ENCODE measurements at regions of chr6 and their contacts with region 1.

Region 1: DNA sequence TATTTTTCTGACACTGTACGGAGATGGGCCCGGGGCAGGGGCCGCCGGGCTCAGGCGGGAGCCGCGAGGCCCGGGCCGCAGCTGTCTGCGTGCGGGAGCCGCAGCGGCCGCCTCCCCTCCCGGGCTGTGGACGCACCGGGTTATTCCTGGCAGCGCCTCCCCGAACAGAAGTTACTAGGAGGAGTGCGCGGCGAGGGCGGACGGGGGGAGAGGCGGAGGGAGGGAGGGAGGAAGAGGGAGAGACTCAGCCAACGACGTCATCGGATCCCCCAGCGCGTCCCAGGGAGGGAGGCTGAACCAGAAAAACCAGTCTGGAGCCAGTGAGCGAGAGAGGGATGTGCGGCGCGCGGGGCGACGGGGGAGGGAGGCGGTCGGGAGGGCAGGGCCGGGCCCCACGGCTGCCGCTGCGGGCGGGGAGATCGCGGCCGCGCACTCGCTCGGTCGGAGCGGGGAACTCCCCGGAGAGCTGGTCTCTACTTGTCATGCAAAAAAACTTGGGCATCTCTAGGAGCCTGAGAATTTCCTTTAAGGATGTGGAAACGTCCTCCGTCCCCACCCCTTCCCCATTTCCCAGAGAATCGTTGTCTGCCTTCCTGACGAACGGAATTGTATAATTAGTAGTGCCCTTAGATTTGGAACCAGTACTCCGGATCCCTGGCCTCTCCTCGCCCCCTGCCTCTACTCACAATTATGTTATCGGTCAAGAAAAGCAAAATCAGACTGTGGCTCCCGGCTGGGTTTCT is 1.4 kb upstream of the HIVEP2 start:
- DNase-seq: peak; percentile 99
- H3K4me3 Mint-ChIP-seq: peak overlapping the region; percentile 92
- H3K27ac Mint-ChIP-seq: peak overlapping the region; percentile 63
- H3K4me1 Mint-ChIP-seq: peaks cover 21% of the 10 kb centered on the region
- H3K27me3 Mint-ChIP-seq: no peaks in the 10 kb centered on the region
- CTCF ChIP-seq: no peak

Region 2: DNA sequence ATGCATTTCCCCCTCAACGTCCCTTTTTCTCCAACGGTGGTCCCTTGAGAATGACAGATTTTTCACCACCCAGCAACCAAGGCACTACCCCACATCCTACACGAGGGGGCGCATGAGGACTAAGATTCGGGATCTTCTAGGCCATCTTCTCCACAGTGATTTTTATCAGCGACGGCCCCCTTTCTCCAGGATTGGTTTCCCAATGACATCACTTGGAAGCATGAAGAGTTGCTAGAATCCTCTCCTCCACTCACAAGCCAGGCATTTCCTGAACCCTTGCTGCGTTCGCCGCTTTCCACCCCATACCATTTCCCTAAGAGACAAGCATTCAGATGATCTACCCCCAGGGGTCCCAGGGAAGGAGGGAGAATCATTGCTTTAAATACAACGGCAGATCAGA is 253.4 kb before region 1 on chr6:
- CTCF ChIA-PET with region 1: interaction called, 4 read pairs
- POLR2A ChIA-PET with region 1: interaction called, 3 read pairs
- intact Hi-C with region 1: loop called (anchors 1 kb)
- DNase-seq: peak; percentile 82
- H3K4me3 Mint-ChIP-seq: no peak overlapping the region
- H3K27ac Mint-ChIP-seq: no peak overlapping the region
- H3K4me1 Mint-ChIP-seq: peaks cover 43% of the 10 kb centered on the region
- H3K27me3 Mint-ChIP-seq: no peaks in the 10 kb centered on the region
- CTCF ChIP-seq: peak; percentile 85

Region 3: GRCh38 chr6:142845624-142846458 is 100.5 kb before region 1 on chr6:
- CTCF ChIA-PET with region 1: no interaction called
- POLR2A ChIA-PET with region 1: interaction called, 12 read pairs
- intact Hi-C with region 1: loop called (anchors 2 kb)
- DNase-seq: peak; percentile 92
- H3K4me3 Mint-ChIP-seq: peak overlapping the region; percentile 69
- H3K27ac Mint-ChIP-seq: peak overlapping the region; percentile 95
- H3K4me1 Mint-ChIP-seq: peaks cover 70% of the 10 kb centered on the region
- H3K27me3 Mint-ChIP-seq: no peaks in the 10 kb centered on the region
- CTCF ChIP-seq: no peak

Region 4: GRCh38 chr6:142926494-142927270 is 19.7 kb before region 1 on chr6:
- CTCF ChIA-PET with region 1: no interaction called
- POLR2A ChIA-PET with region 1: interaction called, 71 read pairs
- intact Hi-C with region 1: no loop called
- DNase-seq: peak; percentile 61
- H3K4me3 Mint-ChIP-seq: peak overlapping the region; percentile 84
- H3K27ac Mint-ChIP-seq: peak overlapping the region; percentile 92
- H3K4me1 Mint-ChIP-seq: peaks cover 44% of the 10 kb centered on the region
- H3K27me3 Mint-ChIP-seq: no peaks in the 10 kb centered on the region
- CTCF ChIP-seq: no peak

Region 5: DNA sequence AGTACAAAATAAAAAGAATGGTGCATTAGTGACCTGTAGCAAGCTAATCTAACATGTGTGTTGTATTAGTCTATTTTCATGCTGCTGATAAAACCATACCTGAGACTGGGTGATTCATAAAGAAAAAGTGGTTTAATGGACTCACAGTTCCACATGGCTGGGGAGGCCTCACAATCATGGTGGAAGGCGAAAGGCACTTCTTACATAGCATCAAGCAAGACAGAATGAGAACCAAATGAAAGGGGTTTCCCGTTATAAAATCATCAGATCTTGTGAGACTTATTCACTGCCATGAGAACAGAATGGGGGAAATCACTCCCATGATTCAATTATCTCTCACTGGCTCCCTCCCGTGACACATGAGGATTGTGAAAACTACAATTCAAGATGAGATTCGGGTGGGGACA is 69.0 kb after region 1 on chr6:
- CTCF ChIA-PET with region 1: no interaction called
- POLR2A ChIA-PET with region 1: no interaction called
- intact Hi-C with region 1: no loop called
- DNase-seq: no peak
- H3K4me3 Mint-ChIP-seq: no peak overlapping the region
- H3K27ac Mint-ChIP-seq: no peak overlapping the region
- H3K4me1 Mint-ChIP-seq: no peaks in the 10 kb centered on the region
- H3K27me3 Mint-ChIP-seq: no peaks in the 10 kb centered on the region
- CTCF ChIP-seq: no peak

Region 6: GRCh38 chr6:143325379-143326140 is 379.2 kb after region 1 on chr6:
- CTCF ChIA-PET with region 1: no interaction called
- POLR2A ChIA-PET with region 1: interaction called, 20 read pairs
- intact Hi-C with region 1: no loop called
- DNase-seq: peak; percentile 77
- H3K4me3 Mint-ChIP-seq: no peak overlapping the region
- H3K27ac Mint-ChIP-seq: no peak overlapping the region
- H3K4me1 Mint-ChIP-seq: peaks cover 13% of the 10 kb centered on the region
- H3K27me3 Mint-ChIP-seq: no peaks in the 10 kb centered on the region
- CTCF ChIP-seq: no peak

Region 7: GRCh38 chr6:143450453-143451371 is 504.4 kb after region 1 on chr6 and contains the starts of genes ADAT2 and PEX3:
- CTCF ChIA-PET with region 1: no interaction called
- POLR2A ChIA-PET with region 1: interaction called, 44 read pairs
- intact Hi-C with region 1: no loop called
- DNase-seq: peak; percentile 95
- H3K4me3 Mint-ChIP-seq: peak within 1 kb of the TSS; percentile 97
- H3K27ac Mint-ChIP-seq: peak within 1 kb of the TSS; percentile 97
- H3K4me1 Mint-ChIP-seq: peaks cover 24% of the 10 kb centered on the region
- H3K27me3 Mint-ChIP-seq: no peaks in the 10 kb centered on the region
- CTCF ChIP-seq: no peak
- total RNA-seq, gene ADAT2: 23.2 and 27.7 TPM in 2 replicates
- total RNA-seq, gene PEX3: 19.8 and 24.3 TPM in 2 replicates

Region 8: DNA sequence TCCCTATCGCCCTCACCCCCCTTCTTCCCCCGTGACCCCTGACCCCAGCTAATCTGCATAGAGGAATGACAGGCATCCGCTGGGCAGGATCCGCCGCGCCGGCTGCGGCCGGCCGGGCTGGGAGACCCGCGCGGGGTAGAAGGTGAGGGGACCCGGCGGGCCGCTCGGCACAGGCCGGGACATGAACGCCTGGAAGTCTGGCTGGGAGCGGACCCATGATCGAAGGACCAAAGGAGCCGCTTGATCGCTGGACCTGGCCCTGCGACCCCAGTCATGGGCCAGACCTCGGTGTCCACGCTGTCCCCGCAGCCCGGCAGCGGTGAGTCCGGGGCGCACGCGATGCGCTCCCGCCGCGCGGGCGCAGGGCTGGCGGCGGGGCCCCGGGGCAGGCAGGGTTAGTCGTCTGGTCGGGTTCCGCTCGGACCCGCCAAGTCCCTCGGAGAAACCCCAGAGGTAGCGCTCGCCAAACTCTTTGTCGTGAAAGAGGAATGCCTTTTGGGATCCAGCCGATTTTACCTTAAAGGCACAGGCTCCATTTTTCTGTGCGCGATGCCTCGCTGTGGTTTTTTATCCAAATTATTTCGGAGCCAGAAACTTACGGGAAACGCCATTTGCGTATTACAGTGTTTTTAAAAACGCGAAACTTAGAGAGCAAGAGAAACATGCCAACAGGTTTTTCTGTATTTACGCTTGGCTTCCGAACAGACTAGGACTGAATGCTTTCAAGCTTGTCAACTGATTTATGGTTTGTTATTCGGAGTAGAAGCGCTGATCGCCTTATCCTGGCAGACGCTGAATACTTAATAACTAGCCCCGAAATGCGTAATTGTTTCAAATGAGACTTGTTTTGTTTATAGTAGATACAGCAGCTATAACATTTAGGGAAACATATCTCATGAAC is 731.8 kb after region 1 on chr6 and contains the start of gene PHACTR2:
- CTCF ChIA-PET with region 1: no interaction called
- POLR2A ChIA-PET with region 1: no interaction called
- intact Hi-C with region 1: no loop called
- DNase-seq: peak; percentile 75
- H3K4me3 Mint-ChIP-seq: peak within 1 kb of the TSS; percentile 88
- H3K27ac Mint-ChIP-seq: peak within 1 kb of the TSS; percentile 87
- H3K4me1 Mint-ChIP-seq: peaks cover 51% of the 10 kb centered on the region
- H3K27me3 Mint-ChIP-seq: no peaks in the 10 kb centered on the region
- CTCF ChIP-seq: no peak
- total RNA-seq, gene PHACTR2: 30.0 and 34.4 TPM in 2 replicates